ENCODE measurements at regions of chr6 and their contacts with region 1.

Region 1: DNA sequence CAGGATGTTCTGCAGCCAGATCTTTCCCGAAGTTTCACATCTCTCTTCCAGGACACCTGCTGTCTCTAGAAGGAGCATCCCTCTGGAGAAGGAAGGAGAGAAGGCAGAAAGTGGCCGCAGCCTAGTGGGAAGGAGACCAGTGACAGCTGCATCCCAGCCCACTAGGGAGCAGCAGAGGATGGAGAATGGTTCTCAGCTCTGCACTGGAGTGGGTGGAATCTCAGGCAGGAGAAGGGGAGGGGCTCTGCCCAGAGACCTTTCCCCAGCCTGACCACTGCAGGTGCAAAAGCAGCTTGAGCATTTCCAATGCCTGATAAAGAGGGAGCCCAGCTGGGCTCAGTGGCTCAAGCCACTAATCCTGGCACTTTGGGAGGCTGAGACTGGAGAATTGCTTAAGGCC is 32.3 kb downstream of the NCR2 start:
- H3K4me3 ChIP-seq: no peak overlapping the region
- H3K27ac ChIP-seq: no peak overlapping the region
- H3K4me1 ChIP-seq: no peaks in the 10 kb centered on the region
- CTCF ChIP-seq: peak; percentile 90

Region 2: GRCh38 chr6:41306187-41306854 is 61.4 kb before region 1 on chr6:
- CTCF ChIA-PET with region 1: interaction called, 53 read pairs
- POLR2A ChIA-PET with region 1: no interaction called
- H3K4me3 ChIP-seq: no peak overlapping the region
- H3K27ac ChIP-seq: no peak overlapping the region
- H3K4me1 ChIP-seq: no peaks in the 10 kb centered on the region
- CTCF ChIP-seq: no peak

Region 3: GRCh38 chr6:41356790-41357189 is 10.9 kb before region 1 on chr6:
- CTCF ChIA-PET with region 1: interaction called, 61 read pairs
- POLR2A ChIA-PET with region 1: no interaction called
- H3K4me3 ChIP-seq: no peak overlapping the region
- H3K27ac ChIP-seq: no peak overlapping the region
- H3K4me1 ChIP-seq: no peaks in the 10 kb centered on the region
- CTCF ChIP-seq: no peak

Region 4: GRCh38 chr6:41442800-41443501 is 75.3 kb after region 1 on chr6:
- CTCF ChIA-PET with region 1: interaction called, 51 read pairs
- POLR2A ChIA-PET with region 1: no interaction called
- H3K4me3 ChIP-seq: no peak overlapping the region
- H3K27ac ChIP-seq: peak overlapping the region; percentile 68
- H3K4me1 ChIP-seq: peaks cover 22% of the 10 kb centered on the region
- CTCF ChIP-seq: peak; percentile 80

Region 5: DNA sequence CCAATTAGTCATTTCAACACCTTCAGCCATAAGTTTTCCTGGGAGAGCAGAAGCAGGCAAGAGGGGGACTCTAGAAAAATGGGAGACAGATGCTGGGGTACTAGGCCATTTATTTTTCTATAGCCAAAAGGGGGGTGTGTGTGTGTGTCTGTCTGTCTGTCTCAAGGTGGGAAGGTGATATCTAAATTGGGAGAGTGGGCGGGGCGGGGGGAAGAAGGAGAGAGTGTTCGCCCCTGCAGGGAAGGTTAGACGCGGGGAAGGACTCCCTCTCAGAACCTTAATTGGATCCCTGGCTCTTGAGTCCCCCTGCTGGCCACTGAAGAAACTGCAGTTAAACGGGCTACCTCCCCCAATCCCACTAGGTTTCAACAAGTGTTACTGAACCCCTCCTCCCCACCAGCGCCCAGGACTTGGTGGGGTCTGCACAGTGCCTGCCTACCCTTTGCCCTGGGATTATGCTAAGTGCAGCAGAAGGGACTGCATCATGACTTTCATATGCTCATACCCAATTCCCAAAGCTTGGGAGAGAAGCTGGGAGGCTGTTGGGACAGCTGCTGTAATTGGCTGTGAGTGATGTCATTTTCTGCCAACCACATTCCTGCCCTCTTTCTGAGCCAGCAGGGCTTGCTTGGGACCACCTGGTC is 224.3 kb after region 1 on chr6:
- CTCF ChIA-PET with region 1: interaction called, 122 read pairs
- POLR2A ChIA-PET with region 1: no interaction called
- H3K4me3 ChIP-seq: no peak overlapping the region
- H3K27ac ChIP-seq: no peak overlapping the region
- H3K4me1 ChIP-seq: no peaks in the 10 kb centered on the region; the same call in 1 of the 2 replicates
- CTCF ChIP-seq: peak; percentile 83

Region 6: DNA sequence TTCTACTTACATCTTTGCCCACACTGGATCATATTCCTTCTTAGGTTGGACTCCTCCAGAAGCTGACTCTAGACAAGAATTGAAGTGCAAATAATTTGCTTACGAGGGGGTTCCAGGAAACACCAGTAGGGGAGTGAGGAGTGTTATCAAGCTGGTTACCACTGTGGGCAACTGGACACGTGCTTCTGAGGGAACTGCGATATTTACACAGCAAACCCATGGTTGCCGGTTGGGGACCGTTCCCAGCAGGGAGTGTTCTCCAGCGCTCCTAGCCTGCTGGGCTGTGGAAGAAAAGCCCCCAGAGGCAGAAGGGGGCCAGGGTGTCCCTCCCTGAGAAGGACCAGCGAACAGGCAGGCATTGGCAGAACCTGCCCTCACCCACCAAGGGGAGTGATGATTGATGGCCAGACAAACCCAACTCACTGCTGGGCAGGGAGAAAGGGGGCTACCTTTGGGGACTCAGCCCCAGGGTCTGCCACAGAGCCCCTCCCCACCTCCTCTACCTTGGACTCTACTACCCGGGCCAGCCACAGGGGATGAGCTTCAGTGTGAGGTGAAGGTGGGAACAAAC is 292.3 kb after region 1 on chr6:
- CTCF ChIA-PET with region 1: interaction called, 21 read pairs
- POLR2A ChIA-PET with region 1: no interaction called
- H3K4me3 ChIP-seq: no peak overlapping the region
- H3K27ac ChIP-seq: no peak overlapping the region
- H3K4me1 ChIP-seq: 0 out of 2 replicates have a peak, but pooled peaks cover 3% of the 10 kb centered on the region
- CTCF ChIP-seq: no peak

Region 7: GRCh38 chr6:41775293-41776181 is 407.8 kb after region 1 on chr6:
- CTCF ChIA-PET with region 1: interaction called, 32 read pairs
- POLR2A ChIA-PET with region 1: no interaction called
- H3K4me3 ChIP-seq: no peak overlapping the region
- H3K27ac ChIP-seq: no peak overlapping the region
- H3K4me1 ChIP-seq: peaks cover 3% of the 10 kb centered on the region; the same call in 1 of the 2 replicates
- CTCF ChIP-seq: peak; percentile 88